ENCODE measurements at regions of chr2 and their contacts with region 1.

Region 1: GRCh38 chr2:105235388-105236054 is 6.0 kb upstream of the GPR45 start:
- DNase-seq: peak; percentile 11 to 64 (median 39)
- ATAC-seq: peak; percentile 53
- H3K4me3 ChIP-seq: no peak overlapping the region
- H3K4me3 Mint-ChIP-seq: no peak overlapping the region
- H3K27ac ChIP-seq: no peak overlapping the region
- H3K27ac Mint-ChIP-seq: no peak overlapping the region
- H3K4me1 ChIP-seq: no peaks in the 10 kb centered on the region
- H3K4me1 Mint-ChIP-seq: peaks cover 0 to 28% (median 10%) of the 10 kb centered on the region in 7 donors
- H3K27me3 ChIP-seq: no peaks in the 10 kb centered on the region
- H3K27me3 Mint-ChIP-seq: peaks cover 0 to 23% (median 0%) of the 10 kb centered on the region in 5 donors

Region 2: GRCh38 chr2:105114551-105114950 is 121.0 kb before region 1 on chr2:
- CTCF ChIA-PET with region 1: interaction called, 14 read pairs
- POLR2A ChIA-PET with region 1: no interaction called
- intact Hi-C with region 1: loop called (anchors 1 kb)
- DNase-seq: peak in 6 of 9 donors; percentile 7 to 29 (median 14)
- ATAC-seq: peak; percentile 51
- H3K4me3 ChIP-seq: no peak overlapping the region
- H3K4me3 Mint-ChIP-seq: no peak overlapping the region
- H3K27ac ChIP-seq: no peak overlapping the region
- H3K27ac Mint-ChIP-seq: no peak overlapping the region
- H3K4me1 ChIP-seq: no peaks in the 10 kb centered on the region
- H3K4me1 Mint-ChIP-seq: peaks cover 0 to 1% (median 0%) of the 10 kb centered on the region in 7 donors
- H3K27me3 ChIP-seq: no peaks in the 10 kb centered on the region
- H3K27me3 Mint-ChIP-seq: no peaks in the 10 kb centered on the region

Measured in naive thymus-derived CD4-positive, alpha-beta T cell (primary cell).